CD4-positive, alpha-beta memory T cell (primary cell): ENCODE measurements at regions of chr12 and their contacts with region 1.

Region 1: DNA sequence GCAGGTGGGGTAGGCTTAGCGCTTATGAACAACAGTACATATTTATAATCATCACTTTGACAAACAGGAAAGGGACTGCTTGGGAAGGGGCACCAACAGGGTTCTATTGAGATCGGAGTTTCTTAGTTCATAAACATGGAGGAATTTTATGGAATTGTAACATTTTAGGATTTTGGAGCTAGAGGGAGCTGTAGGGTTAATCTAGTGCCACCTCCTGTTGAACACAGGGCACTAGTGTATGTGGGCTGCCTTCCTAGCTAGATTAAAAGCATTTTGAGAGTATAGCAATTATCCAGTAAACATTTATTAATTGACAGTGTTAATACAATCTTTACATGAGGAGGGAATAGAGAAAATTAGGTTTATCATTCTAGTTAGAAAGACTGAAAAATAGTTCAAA is 23.1 kb upstream of the TBC1D30 start:
- DNase-seq: no peak
- H3K4me3 ChIP-seq: no peak overlapping the region
- H3K4me3 Mint-ChIP-seq: no peak overlapping the region
- H3K27ac ChIP-seq: no peak overlapping the region
- H3K27ac Mint-ChIP-seq: no peak overlapping the region
- H3K4me1 ChIP-seq: peaks cover 3% of the 10 kb centered on the region
- H3K4me1 Mint-ChIP-seq: peaks cover 0 to 4% (median 1%) of the 10 kb centered on the region in 4 donors
- H3K27me3 ChIP-seq: no peaks in the 10 kb centered on the region
- H3K27me3 Mint-ChIP-seq: peaks cover 23 to 29% of the 10 kb centered on the region in 2 donors

Region 2: DNA sequence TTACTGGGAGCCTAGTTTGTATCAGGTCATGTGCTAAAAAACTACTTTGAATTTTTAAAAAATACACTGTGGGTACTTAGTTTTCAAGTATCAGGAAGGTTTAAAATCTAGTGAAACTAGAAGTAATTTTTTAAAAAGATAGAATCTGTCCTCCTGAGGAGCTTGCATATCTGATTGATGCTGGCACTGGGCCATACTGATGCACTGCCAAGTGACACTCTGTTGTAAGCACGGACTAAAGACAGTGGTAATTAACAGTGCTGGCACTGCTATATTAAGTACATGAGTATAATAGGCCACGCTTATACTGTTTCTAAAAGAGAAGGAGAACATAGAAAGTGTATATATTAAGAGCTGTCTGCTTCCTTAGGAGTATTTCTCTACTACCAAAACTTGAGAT is 13.1 kb after region 1 on chr12:
- CTCF ChIA-PET with region 1: interaction called, 10 read pairs
- POLR2A ChIA-PET with region 1: interaction called, 3 read pairs
- intact Hi-C with region 1: no loop called
- DNase-seq: no peak
- H3K4me3 ChIP-seq: no peak overlapping the region
- H3K4me3 Mint-ChIP-seq: no peak overlapping the region
- H3K27ac ChIP-seq: no peak overlapping the region
- H3K27ac Mint-ChIP-seq: no peak overlapping the region
- H3K4me1 ChIP-seq: no peaks in the 10 kb centered on the region
- H3K4me1 Mint-ChIP-seq: peaks cover 0 to 2% (median 0%) of the 10 kb centered on the region in 4 donors
- H3K27me3 ChIP-seq: no peaks in the 10 kb centered on the region
- H3K27me3 Mint-ChIP-seq: peaks cover 16 to 22% of the 10 kb centered on the region in 2 donors

Region 3: GRCh38 chr12:65232476-65233077 is 431.2 kb after region 1 on chr12:
- CTCF ChIA-PET with region 1: interaction called, 3 read pairs
- POLR2A ChIA-PET with region 1: no interaction called
- intact Hi-C with region 1: loop called (anchors 1 kb)
- DNase-seq: peak in 4 of 5 donors; percentile 8 to 25 (median 16)
- H3K4me3 ChIP-seq: no peak overlapping the region
- H3K4me3 Mint-ChIP-seq: no peak overlapping the region
- H3K27ac ChIP-seq: no peak overlapping the region
- H3K27ac Mint-ChIP-seq: peak overlapping the region in 4 of 7 donors; percentile 76 to 86 (median 81)
- H3K4me1 ChIP-seq: peaks cover 5% of the 10 kb centered on the region
- H3K4me1 Mint-ChIP-seq: peaks cover 6 to 13% (median 8%) of the 10 kb centered on the region in 4 donors
- H3K27me3 ChIP-seq: no peaks in the 10 kb centered on the region
- H3K27me3 Mint-ChIP-seq: no peaks in the 10 kb centered on the region